ENCODE measurements at regions of chr10 and their contacts with region 1.

Region 1: DNA sequence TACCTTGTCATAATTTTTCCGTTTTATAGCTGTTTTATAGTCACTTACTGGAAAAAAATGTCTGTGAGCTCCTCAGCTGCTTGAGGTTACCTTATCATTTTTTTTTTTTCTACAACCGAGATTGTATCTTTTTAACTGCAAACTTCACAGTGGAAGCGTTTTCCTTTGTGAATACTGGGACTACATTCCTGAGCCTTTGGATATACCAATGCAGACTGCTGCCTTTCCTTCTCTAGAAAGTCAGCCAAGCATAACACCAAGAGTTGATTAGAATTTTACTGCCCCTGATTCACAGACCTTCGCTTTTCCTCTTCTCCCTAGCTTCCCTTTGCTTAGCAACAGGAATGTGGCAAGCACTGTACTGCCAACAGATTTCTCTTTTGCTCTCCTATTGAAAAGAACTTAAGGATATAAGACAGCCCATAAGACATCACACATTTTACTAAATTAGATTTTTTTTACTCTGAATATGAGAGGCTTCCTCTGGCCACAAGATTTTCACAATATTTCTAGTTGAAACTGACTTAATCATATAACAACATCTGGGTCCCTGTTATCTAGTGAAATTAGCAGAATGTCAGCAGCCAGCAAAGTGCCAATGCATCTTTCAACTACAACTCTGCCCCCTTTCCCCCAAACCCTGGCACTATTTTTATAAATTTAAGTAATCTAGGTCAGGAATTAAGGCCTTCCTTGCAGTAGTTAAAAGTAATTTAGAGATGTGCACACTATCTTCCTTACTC is 170.6 kb downstream of the PRKG1 start:
- DNase-seq: peak in 1 of 2 donors; percentile 18
- ATAC-seq: peak; percentile 65 to 90 (median 81)
- H3K4me3 ChIP-seq: peak overlapping the region in 5 of 10 donors; percentile 8 to 18 (median 11)
- H3K27ac ChIP-seq: peak overlapping the region in 9 of 10 donors; percentile 13 to 80 (median 59)
- H3K4me1 ChIP-seq: peaks cover 0 to 62% (median 28%) of the 10 kb centered on the region in 9 donors
- H3K27me3 ChIP-seq: no peaks in the 10 kb centered on the region
- CTCF ChIP-seq: no peak

Region 2: DNA sequence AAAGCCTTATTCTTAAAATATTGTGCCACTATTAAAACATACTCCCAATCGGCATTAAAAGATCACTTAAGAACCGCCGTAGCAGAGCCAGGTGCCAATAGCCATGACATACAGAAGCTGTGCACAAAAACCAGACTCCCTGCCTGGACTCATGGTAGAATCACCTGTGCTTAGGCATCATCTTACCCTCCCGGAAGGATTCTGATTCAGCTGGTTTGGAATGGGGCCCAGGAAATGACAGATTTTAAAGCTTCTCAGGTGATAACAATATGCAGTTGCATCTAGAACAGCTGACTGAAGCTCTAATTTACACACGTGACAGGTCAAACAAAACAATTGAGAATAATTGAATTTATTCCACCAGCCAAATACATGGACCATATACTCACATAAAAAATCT is 370.2 kb before region 1 on chr10:
- intact Hi-C with region 1: no loop called
- DNase-seq: no peak
- ATAC-seq: no peak
- H3K4me3 ChIP-seq: no peak overlapping the region
- H3K27ac ChIP-seq: no peak overlapping the region
- H3K4me1 ChIP-seq: no peaks in the 10 kb centered on the region
- H3K27me3 ChIP-seq: peaks cover 0 to 13% (median 0%) of the 10 kb centered on the region in 7 donors
- CTCF ChIP-seq: no peak

Region 3: DNA sequence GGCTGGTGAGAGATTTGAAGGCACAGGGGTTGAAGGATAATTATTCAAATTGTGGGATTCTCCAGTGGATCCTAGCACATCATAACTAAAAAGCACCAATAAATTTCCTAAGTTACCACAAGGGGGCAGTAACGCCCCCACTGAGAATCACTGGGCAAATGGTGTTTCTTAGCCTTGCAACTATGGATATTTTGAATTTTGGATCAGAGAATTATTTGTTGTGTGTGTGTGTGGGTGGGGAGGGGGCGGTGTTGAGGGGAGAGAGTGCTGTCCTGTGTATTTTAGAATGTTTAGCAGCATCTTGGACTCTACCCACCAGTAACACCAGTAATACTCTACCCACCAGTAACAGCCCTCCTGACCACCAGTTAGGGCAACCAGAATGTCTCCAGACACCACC is 233.9 kb before region 1 on chr10:
- intact Hi-C with region 1: no loop called
- DNase-seq: no peak
- ATAC-seq: peak in 3 of 8 donors; percentile 27 to 54 (median 46)
- H3K4me3 ChIP-seq: no peak overlapping the region
- H3K27ac ChIP-seq: no peak overlapping the region
- H3K4me1 ChIP-seq: peaks cover 0 to 25% (median 6%) of the 10 kb centered on the region in 9 donors
- H3K27me3 ChIP-seq: no peaks in the 10 kb centered on the region
- CTCF ChIP-seq: peak; percentile 59 to 81 (median 73)

Region 4: DNA sequence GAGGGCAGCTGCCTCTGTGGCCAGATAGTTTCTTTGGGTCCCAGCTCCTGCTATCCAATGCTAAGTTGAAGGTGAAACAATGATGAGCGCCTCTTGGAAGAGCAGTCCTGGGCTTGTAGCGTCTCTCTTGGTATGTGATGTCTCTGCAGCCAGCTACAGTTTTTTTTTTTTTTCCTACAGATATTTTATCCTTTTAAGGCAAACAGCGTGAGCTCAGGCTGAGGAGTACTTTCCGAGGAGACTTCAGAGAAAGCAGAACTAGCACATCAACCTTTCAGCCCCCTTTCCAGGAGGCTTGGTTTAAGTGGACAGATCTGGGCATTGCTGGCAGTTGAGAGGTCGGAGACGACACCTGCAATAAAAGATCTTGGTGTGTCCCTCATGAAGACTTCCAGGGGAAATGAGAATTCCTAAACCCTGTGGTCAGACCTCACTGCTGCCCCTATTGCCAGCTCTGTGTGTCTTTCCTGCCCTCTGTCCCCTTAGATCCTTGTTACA is 161.5 kb before region 1 on chr10:
- intact Hi-C with region 1: loop called in 4 of 10 experiments (anchors 5 to 10 kb)
- DNase-seq: no peak
- ATAC-seq: peak in 5 of 8 donors; percentile 24 to 52 (median 29)
- H3K4me3 ChIP-seq: no peak overlapping the region
- H3K27ac ChIP-seq: peak overlapping the region in 4 of 10 donors; percentile 29 to 51 (median 39)
- H3K4me1 ChIP-seq: peaks cover 0 to 42% (median 16%) of the 10 kb centered on the region in 9 donors
- H3K27me3 ChIP-seq: no peaks in the 10 kb centered on the region
- CTCF ChIP-seq: peak in 1 of 9 donors; percentile 7

Measured in heart right ventricle (tissue), 16 donors.